GM12878 (cell line): ENCODE measurements at regions of chr11 and their contacts with region 1.

Region 1: GRCh38 chr11:67317205-67317887 is 14.0 kb downstream of the SSH3 start:
- DNase-seq: peak; percentile 92
- ATAC-seq: peak; percentile 88
- H3K4me3 ChIP-seq: peak overlapping the region; percentile 80
- H3K27ac ChIP-seq: peak overlapping the region; percentile 85
- H3K4me1 ChIP-seq: peaks cover 3% of the 10 kb centered on the region
- H3K27me3 ChIP-seq: no peaks in the 10 kb centered on the region
- CTCF ChIP-seq: peak; percentile 87 to 97 (median 96); a peak in 5 of 6 replicates
- EP300 ChIP-seq: no peak
- POLR2A ChIP-seq: peak; percentile 71
- RAD21 ChIP-seq: peak; percentile 88

Region 2: GRCh38 chr11:67239783-67240575 is 77.4 kb before region 1 on chr11:
- CTCF ChIA-PET with region 1: interaction called, 11 read pairs
- POLR2A ChIA-PET with region 1: no interaction called
- RAD21 ChIA-PET with region 1: interaction called, 8 read pairs
- SMC1A ChIA-PET with region 1: interaction called, 6 read pairs
- in situ Hi-C with region 1: no loop called
- intact Hi-C with region 1: no loop called
- DNase-seq: peak; percentile 93
- ATAC-seq: peak; percentile 93
- H3K4me3 ChIP-seq: peak overlapping the region; percentile 89
- H3K27ac ChIP-seq: peak overlapping the region; percentile 90
- H3K4me1 ChIP-seq: peaks cover 17% of the 10 kb centered on the region
- H3K27me3 ChIP-seq: no peaks in the 10 kb centered on the region
- CTCF ChIP-seq: peak in 1 of 3 experiments; percentile 6; a peak in 1 of 6 replicates
- EP300 ChIP-seq: peak in 1 of 2 experiments; percentile 27; a peak in 1 of 4 replicates
- POLR2A ChIP-seq: peak; percentile 96
- RAD21 ChIP-seq: 0 out of 2 replicates have a peak, but pooled peaks have one; percentile 11

Region 3: GRCh38 chr11:67265633-67266423 is 51.5 kb before region 1 on chr11:
- CTCF ChIA-PET with region 1: interaction called, 151 read pairs
- POLR2A ChIA-PET with region 1: interaction called, 25 read pairs
- RAD21 ChIA-PET with region 1: interaction called, 69 read pairs
- SMC1A ChIA-PET with region 1: interaction called, 65 read pairs
- in situ Hi-C with region 1: loop called (anchors 5 kb)
- intact Hi-C with region 1: loop called (anchors 1 kb)
- DNase-seq: no peak
- ATAC-seq: peak; percentile 54
- H3K4me3 ChIP-seq: no peak overlapping the region
- H3K27ac ChIP-seq: 0 out of 2 replicates have a peak overlapping the region, but pooled peaks have one; percentile 33
- H3K4me1 ChIP-seq: peaks cover 36% of the 10 kb centered on the region
- H3K27me3 ChIP-seq: no peaks in the 10 kb centered on the region
- CTCF ChIP-seq: peak; percentile 63 to 84 (median 70); a peak in 5 of 6 replicates
- EP300 ChIP-seq: no peak
- POLR2A ChIP-seq: no peak
- RAD21 ChIP-seq: peak; percentile 80

Region 4: DNA sequence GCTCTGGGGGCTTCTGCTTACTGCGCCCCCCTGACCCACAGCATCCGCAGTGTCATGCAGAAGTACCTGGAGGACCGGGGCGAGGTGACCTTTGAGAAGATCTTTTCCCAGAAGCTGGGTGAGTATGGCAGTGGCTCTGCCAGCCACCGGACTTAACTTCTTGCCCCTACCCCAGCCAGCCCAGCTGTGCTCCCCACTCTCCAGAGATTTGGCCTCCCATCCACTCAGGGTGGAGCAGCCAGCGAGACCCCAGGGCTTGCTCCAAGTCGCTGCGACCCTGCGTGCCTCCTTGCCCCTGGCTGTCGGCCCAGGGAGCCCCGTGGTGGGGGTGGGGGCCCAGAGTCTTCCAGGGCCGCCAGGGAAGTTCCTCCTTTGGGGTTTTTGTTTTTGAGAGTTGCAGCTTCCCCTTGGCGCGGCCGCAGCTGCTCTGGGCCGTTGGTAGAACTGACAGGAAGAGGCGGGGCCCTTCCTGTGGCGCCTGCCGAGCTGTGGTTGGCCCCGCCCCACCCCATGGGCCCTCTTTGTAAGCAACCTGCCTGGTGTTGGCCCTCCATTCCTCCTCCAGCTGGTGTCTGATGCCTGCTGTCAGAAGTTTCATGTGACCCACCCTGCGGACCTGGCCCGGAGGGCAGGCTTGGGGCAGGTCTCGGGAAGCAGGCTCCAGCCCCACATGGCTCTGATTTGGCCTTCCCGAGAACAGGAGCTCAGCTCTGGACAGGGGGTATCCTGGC is 40.0 kb before region 1 on chr11:
- CTCF ChIA-PET with region 1: interaction called, 31 read pairs
- POLR2A ChIA-PET with region 1: interaction called, 6 read pairs
- RAD21 ChIA-PET with region 1: interaction called, 14 read pairs
- SMC1A ChIA-PET with region 1: interaction called, 9 read pairs
- in situ Hi-C with region 1: no loop called
- intact Hi-C with region 1: no loop called
- DNase-seq: peak; percentile 66
- ATAC-seq: peak; percentile 95
- H3K4me3 ChIP-seq: peak overlapping the region; percentile 57; the same call in 1 of the 2 replicates
- H3K27ac ChIP-seq: peak overlapping the region; percentile 99
- H3K4me1 ChIP-seq: peaks cover 47% of the 10 kb centered on the region
- H3K27me3 ChIP-seq: no peaks in the 10 kb centered on the region
- CTCF ChIP-seq: no peak
- EP300 ChIP-seq: peak; percentile 48 to 76; a peak in 3 of 4 replicates
- POLR2A ChIP-seq: peak; percentile 83
- RAD21 ChIP-seq: no peak

Region 5: GRCh38 chr11:67345920-67346799 is 28.8 kb after region 1 on chr11:
- CTCF ChIA-PET with region 1: interaction called, 72 read pairs
- POLR2A ChIA-PET with region 1: interaction called, 10 read pairs
- RAD21 ChIA-PET with region 1: interaction called, 75 read pairs
- SMC1A ChIA-PET with region 1: interaction called, 29 read pairs
- in situ Hi-C with region 1: no loop called
- intact Hi-C with region 1: no loop called
- DNase-seq: peak; percentile 24
- ATAC-seq: peak; percentile 72
- H3K4me3 ChIP-seq: no peak overlapping the region
- H3K27ac ChIP-seq: peak overlapping the region; percentile 35
- H3K4me1 ChIP-seq: peaks cover 52% of the 10 kb centered on the region
- H3K27me3 ChIP-seq: no peaks in the 10 kb centered on the region
- CTCF ChIP-seq: peak; percentile 88 to 97 (median 93); a peak in 5 of 6 replicates
- EP300 ChIP-seq: no peak
- POLR2A ChIP-seq: no peak
- RAD21 ChIP-seq: peak; percentile 69